Dendritic cell treated with granulocyte-macrophage colony-stimulating factor and Interleukin-4, amounts not matched to agents 40 ng/mL and 50 ng/mL, for 4 days (primary cell): ENCODE measurements at regions of chr18 and their contacts with region 1.

Region 1: DNA sequence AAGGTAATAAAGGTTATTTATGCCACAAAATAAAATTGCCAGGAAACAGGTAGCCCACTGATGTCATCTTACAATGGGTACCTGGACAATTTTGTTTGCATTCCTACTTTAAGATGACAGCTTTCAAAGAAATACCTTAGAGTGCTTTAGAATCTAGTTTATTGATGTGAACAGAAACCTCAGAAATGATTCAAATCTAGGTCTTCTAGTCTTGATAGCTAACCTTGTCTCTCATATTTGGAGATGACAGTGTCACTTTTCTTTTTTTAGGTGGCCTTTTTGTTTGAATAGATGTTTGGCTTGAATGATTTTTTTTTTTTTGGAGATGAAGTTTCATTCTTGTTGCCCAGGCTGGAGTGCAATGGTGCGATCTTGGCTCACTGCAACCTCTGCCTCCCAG is 69.1 kb downstream of the PIK3C3 start:
- H3K4me3 Mint-ChIP-seq: no peak overlapping the region
- H3K27ac Mint-ChIP-seq: no peak overlapping the region
- H3K4me1 Mint-ChIP-seq: no peaks in the 10 kb centered on the region
- H3K27me3 Mint-ChIP-seq: no peaks in the 10 kb centered on the region

Region 2: DNA sequence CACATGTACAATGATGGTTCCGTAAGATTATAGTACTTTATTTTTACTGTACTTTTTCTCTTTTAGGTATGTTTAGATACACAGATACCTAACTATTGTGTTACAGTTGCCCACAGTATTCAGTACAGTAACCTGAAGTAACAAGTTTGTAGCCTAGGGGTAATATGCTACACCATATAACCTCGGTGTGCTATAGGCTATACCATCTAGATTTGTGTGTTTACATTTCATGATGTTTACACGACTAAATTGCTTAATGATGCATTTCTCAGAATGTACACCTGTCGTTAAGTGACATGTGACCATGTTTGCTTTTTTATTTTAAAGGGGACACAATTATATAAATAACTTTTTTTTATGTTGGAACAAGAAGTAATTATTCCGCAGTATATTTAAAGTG is 34.6 kb before region 1 on chr18:
- intact Hi-C with region 1: loop called (anchors 5 kb)
- H3K4me3 Mint-ChIP-seq: no peak overlapping the region
- H3K27ac Mint-ChIP-seq: no peak overlapping the region
- H3K4me1 Mint-ChIP-seq: no peaks in the 10 kb centered on the region
- H3K27me3 Mint-ChIP-seq: no peaks in the 10 kb centered on the region